Aorta (tissue), 5 donors: ENCODE measurements at regions of chr1 and their contacts with region 1.

Region 1: GRCh38 chr1:110766025-110766647 is 91.4 kb upstream of the KCNA3 start:
- DNase-seq: no peak
- ATAC-seq: no peak
- H3K4me3 ChIP-seq: no peak overlapping the region
- H3K27ac ChIP-seq: no peak overlapping the region
- H3K4me1 ChIP-seq: no peaks in the 10 kb centered on the region
- H3K27me3 ChIP-seq: peaks cover 0 to 1% of the 10 kb centered on the region in 2 donors

Region 2: DNA sequence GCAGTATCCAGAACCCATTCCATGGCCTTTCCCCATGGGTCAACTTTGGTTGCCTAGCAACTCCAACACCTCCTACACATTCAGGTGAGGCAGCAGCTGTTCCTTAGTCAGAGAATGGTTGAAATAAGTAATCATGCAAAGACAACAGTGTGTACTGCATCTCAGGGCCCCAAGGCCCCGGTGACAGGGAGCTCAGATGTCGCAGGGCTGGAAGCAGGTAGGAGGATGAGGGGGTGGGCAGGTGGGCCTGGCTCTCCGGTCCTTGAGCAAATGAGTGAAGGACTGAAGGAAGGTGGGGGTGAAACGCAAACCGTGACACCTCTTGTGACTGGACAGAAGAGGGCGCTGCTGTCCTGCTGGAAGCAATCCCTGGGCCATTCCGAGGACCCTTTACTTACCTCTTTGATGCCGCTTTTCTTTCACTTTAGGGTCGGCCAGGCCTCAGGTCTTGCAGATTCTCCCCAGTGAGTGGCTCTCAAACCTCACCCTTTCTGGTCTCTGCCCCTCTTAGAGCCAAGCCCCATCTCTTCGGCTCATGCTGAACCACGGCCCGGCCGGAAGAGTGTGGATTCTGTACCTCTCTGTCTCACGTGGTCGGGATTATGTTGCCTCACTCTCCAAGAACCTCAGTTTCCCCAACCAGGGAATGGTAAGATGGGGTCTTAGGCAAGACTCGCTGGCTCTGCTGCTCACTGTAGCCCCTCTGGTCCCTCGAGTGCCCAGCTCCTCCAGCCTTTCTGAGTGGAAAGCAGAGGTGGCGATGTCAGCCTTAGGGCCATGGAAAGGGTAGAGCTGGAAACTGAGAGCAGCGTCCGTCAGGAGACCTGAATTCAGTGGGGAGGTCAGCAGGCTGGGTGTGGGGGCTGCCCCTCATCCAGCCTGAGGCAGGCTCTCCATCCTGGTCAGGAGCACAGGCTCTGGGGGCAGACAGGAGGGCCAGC is 241.6 kb before region 1 on chr1:
- intact Hi-C with region 1: loop called (anchors 5 to 10 kb)
- DNase-seq: no peak
- ATAC-seq: no peak
- H3K4me3 ChIP-seq: no peak overlapping the region
- H3K27ac ChIP-seq: no peak overlapping the region
- H3K4me1 ChIP-seq: no peaks in the 10 kb centered on the region
- H3K27me3 ChIP-seq: no peaks in the 10 kb centered on the region

Region 3: GRCh38 chr1:110630839-110631663 is 135.1 kb before region 1 on chr1:
- intact Hi-C with region 1: loop called (anchors 1 to 5 kb)
- DNase-seq: peak; percentile 81 to 91
- ATAC-seq: peak; percentile 78
- H3K4me3 ChIP-seq: no peak overlapping the region
- H3K27ac ChIP-seq: no peak overlapping the region
- H3K4me1 ChIP-seq: no peaks in the 10 kb centered on the region
- H3K27me3 ChIP-seq: no peaks in the 10 kb centered on the region

Region 4: GRCh38 chr1:110726755-110727154 is 39.4 kb before region 1 on chr1:
- intact Hi-C with region 1: no loop called
- DNase-seq: no peak
- ATAC-seq: no peak
- H3K4me3 ChIP-seq: no peak overlapping the region
- H3K27ac ChIP-seq: no peak overlapping the region
- H3K4me1 ChIP-seq: no peaks in the 10 kb centered on the region
- H3K27me3 ChIP-seq: no peaks in the 10 kb centered on the region